ENCODE measurements at regions of chr16 and their contacts with region 1.

Region 1: DNA sequence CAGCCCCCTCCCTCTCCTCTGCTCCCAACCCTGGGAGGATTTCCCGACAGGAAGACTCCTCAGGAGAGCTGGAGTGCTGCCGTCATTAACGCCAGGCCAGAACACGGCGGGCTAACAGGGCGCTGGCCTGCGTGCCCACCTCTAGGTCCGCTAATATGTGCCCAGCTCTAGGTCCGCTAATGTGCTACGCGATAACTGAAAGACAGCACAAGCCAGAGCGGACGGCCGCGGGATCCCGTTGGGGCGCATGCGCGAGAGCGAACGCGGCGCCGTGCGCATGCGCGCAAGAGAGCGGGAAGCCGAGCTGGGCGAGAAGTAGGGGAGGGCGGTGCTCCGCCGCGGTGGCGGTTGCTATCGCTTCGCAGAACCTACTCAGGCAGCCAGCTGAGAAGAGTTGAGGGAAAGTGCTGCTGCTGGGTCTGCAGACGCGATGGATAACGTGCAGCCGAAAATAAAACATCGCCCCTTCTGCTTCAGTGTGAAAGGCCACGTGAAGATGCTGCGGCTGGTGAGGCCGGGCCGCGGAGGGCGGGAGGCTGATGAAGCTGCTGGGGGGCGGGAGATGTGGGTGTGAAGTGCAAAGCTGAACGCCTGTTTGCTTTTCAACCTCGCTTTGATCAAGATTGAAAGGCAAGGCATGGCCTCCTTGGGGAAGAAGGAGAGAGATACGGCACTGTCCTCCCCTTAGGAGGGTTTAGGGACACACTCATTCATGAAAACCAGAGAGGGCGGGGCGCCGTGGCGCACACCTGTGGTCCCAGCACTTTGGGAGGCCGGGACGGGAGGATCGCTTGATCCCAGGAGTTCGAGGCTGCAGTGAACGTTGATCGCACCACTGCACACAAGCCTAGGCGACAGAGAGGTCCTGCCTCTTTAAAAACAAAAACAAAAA is at the start of gene CKLF:
- DNase-seq: peak; percentile 93
- ATAC-seq: peak; percentile 66
- H3K4me3 Mint-ChIP-seq: peak within 1 kb of the TSS; percentile 96
- H3K27ac Mint-ChIP-seq: peak within 1 kb of the TSS; percentile 92
- H3K4me1 Mint-ChIP-seq: peaks cover 74% of the 10 kb centered on the region
- H3K27me3 Mint-ChIP-seq: no peaks in the 10 kb centered on the region
- CTCF ChIP-seq: no peak
- total RNA-seq, gene CKLF: 12.1 and 20.0 TPM in 2 replicates

Region 2: DNA sequence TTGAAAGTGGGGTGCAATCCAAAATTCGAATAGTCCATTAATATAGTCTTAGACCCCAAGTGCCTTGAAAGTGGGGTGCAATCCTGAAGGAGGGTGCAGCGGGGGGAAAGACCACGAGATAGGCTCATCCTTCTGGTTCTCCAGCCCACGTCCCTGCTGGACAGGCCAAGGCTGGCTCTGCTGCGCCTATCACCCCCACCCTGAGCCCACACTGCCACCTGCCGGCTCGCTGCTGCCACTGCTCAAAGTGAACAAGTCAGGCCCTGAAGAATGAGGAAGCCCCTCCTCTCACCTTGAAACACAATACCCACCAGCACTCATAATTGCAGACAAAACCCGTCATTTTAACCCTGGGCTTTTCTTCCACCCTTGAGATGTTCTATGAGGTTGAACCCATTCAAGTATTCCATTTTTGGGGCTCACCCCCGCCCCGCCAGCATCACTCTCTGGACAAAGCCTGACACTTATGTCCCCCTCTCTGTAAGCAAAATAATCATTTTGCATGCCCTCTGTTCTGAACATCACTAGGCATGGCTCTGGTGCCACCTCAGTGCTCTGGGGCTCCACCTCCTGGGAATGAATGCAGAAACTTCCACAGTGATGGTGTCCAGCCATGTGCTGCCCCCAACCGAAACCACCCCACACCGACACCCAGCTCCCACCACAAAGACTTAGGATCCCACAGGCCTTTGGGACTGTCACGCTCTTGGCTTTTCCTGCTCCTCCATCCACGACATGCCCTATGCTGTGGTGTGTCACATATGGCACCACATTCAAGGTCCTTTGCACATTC is 68.6 kb before region 1 on chr16:
- CTCF ChIA-PET with region 1: interaction called, 5 read pairs
- POLR2A ChIA-PET with region 1: interaction called, 4 read pairs
- intact Hi-C with region 1: loop called (anchors 2 kb)
- DNase-seq: peak; percentile 69
- ATAC-seq: peak; percentile 94
- H3K4me3 Mint-ChIP-seq: no peak overlapping the region
- H3K27ac Mint-ChIP-seq: no peak overlapping the region
- H3K4me1 Mint-ChIP-seq: peaks cover 15% of the 10 kb centered on the region
- H3K27me3 Mint-ChIP-seq: no peaks in the 10 kb centered on the region
- CTCF ChIP-seq: peak; percentile 66

Region 3: GRCh38 chr16:66516808-66517585 is 35.5 kb before region 1 on chr16:
- CTCF ChIA-PET with region 1: interaction called, 9 read pairs
- POLR2A ChIA-PET with region 1: interaction called, 162 read pairs
- intact Hi-C with region 1: loop called (anchors 1 kb)
- DNase-seq: peak; percentile 72
- ATAC-seq: peak; percentile 91
- H3K4me3 Mint-ChIP-seq: peak overlapping the region; percentile 90
- H3K27ac Mint-ChIP-seq: peak overlapping the region; percentile 99
- H3K4me1 Mint-ChIP-seq: peaks cover 66% of the 10 kb centered on the region
- H3K27me3 Mint-ChIP-seq: no peaks in the 10 kb centered on the region
- CTCF ChIP-seq: no peak

Region 4: GRCh38 chr16:66521951-66522771 is 30.4 kb before region 1 on chr16:
- CTCF ChIA-PET with region 1: interaction called, 4 read pairs
- POLR2A ChIA-PET with region 1: interaction called, 162 read pairs
- intact Hi-C with region 1: loop called (anchors 1 kb)
- DNase-seq: peak; percentile 62
- ATAC-seq: peak; percentile 33
- H3K4me3 Mint-ChIP-seq: peak overlapping the region; percentile 69
- H3K27ac Mint-ChIP-seq: peak overlapping the region; percentile 93
- H3K4me1 Mint-ChIP-seq: peaks cover 97% of the 10 kb centered on the region
- H3K27me3 Mint-ChIP-seq: no peaks in the 10 kb centered on the region
- CTCF ChIP-seq: no peak

Region 5: DNA sequence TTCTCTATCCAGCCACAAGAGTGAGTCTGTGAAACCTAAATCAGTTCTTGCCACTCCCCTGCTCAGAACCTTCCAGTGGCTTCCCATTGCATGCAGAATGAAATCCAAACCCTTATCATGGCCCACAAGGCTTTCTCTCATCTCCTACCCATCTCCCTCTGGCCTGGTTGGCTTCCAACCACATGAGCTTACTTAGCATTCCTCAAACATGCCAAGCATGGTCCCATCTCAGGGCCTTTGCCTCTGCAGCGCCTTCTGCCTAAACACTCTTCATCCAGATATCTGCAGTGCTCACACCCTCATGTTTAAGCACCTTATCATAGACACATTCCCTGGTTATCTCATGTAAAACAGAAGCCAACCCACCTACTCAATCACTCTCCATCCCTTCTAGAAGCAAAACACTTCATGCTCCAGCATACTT is 18.1 kb before region 1 on chr16:
- CTCF ChIA-PET with region 1: no interaction called
- POLR2A ChIA-PET with region 1: interaction called, 10 read pairs
- intact Hi-C with region 1: loop called (anchors 1 kb)
- DNase-seq: no peak
- ATAC-seq: no peak
- H3K4me3 Mint-ChIP-seq: no peak overlapping the region
- H3K27ac Mint-ChIP-seq: no peak overlapping the region
- H3K4me1 Mint-ChIP-seq: peaks cover 27% of the 10 kb centered on the region
- H3K27me3 Mint-ChIP-seq: no peaks in the 10 kb centered on the region
- CTCF ChIP-seq: no peak

Region 6: DNA sequence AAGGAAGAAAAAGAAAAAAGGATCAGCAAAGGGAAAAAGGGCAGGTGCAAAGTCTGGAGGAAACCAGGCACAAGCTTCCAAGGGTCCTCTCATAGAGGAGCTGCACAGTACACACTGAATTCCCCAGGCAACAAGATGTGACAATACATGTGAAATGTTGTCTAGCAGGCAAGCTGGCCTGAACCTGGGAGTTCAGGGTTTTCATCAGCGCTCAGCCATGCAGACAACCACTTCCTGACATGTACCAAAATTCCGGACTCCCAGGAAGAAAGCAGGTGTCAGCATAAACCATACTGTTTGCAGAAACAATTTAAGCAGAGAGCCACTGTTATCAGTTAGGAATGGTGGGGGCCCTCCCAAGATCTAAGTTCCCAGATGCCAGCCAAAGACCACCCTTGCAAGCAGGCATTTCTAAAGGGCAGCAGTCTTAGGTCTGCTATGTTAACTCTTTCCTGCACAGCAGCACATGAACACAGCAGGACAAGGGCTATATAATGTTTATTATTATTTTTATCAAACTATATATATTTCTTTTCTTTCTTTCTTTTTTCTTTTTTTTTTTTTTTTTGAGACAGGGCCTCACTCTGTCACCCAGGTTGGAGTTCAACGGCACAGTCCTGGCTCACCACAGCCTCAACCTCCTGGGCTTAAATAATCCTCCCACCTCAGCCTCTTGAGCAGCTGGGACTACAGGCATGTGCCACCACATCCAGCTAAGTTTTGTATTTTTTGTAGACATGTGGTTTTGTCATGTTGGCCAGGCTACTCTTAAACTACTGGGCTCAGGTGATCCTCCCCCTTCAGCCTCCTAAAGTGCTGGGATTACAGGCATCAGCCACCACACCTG is 12.7 kb before region 1 on chr16:
- CTCF ChIA-PET with region 1: no interaction called
- POLR2A ChIA-PET with region 1: interaction called, 10 read pairs
- intact Hi-C with region 1: loop called (anchors 1 kb)
- DNase-seq: no peak
- ATAC-seq: peak; percentile 78
- H3K4me3 Mint-ChIP-seq: peak overlapping the region; percentile 65
- H3K27ac Mint-ChIP-seq: peak overlapping the region; percentile 43
- H3K4me1 Mint-ChIP-seq: peaks cover 55% of the 10 kb centered on the region
- H3K27me3 Mint-ChIP-seq: no peaks in the 10 kb centered on the region
- CTCF ChIP-seq: no peak

Region 7: GRCh38 chr16:67017810-67018488 is 465.4 kb after region 1 on chr16:
- CTCF ChIA-PET with region 1: no interaction called
- POLR2A ChIA-PET with region 1: no interaction called
- intact Hi-C with region 1: no loop called
- DNase-seq: peak; percentile 41
- ATAC-seq: peak; percentile 80
- H3K4me3 Mint-ChIP-seq: no peak overlapping the region
- H3K27ac Mint-ChIP-seq: no peak overlapping the region
- H3K4me1 Mint-ChIP-seq: peaks cover 4% of the 10 kb centered on the region
- H3K27me3 Mint-ChIP-seq: no peaks in the 10 kb centered on the region
- CTCF ChIP-seq: no peak